Activated naive CD4-positive, alpha-beta T cell treated with anti-CD3 and anti-CD28 coated beads for 36 hours (primary cell): ENCODE measurements at regions of chr7 and their contacts with region 1.

Region 1: GRCh38 chr7:7968543-7969305 is at the start of gene GLCCI1:
- DNase-seq: peak; percentile 98
- H3K4me3 Mint-ChIP-seq: peak within 1 kb of the TSS; percentile 90
- H3K27ac Mint-ChIP-seq: peak within 1 kb of the TSS; percentile 92
- H3K4me1 Mint-ChIP-seq: peaks cover 29% of the 10 kb centered on the region
- H3K27me3 Mint-ChIP-seq: no peaks in the 10 kb centered on the region
- total RNA-seq, gene GLCCI1: 12.9 to 13.3 TPM

Region 2: GRCh38 chr7:7182156-7183060 is 786.3 kb before region 1 on chr7 and contains the start of gene C1GALT1:
- CTCF ChIA-PET with region 1: interaction called, 4 read pairs
- intact Hi-C with region 1: loop called (anchors 1 kb)
- DNase-seq: peak; percentile 97
- H3K4me3 Mint-ChIP-seq: peak within 1 kb of the TSS; percentile 90
- H3K27ac Mint-ChIP-seq: peak within 1 kb of the TSS; percentile 98
- H3K4me1 Mint-ChIP-seq: peaks cover 19% of the 10 kb centered on the region
- H3K27me3 Mint-ChIP-seq: no peaks in the 10 kb centered on the region
- total RNA-seq, gene C1GALT1: 25.7 to 29.1 TPM

Region 3: GRCh38 chr7:7529328-7529727 is 439.4 kb before region 1 on chr7:
- CTCF ChIA-PET with region 1: no interaction called
- intact Hi-C with region 1: no loop called
- DNase-seq: no peak
- H3K4me3 Mint-ChIP-seq: no peak overlapping the region
- H3K27ac Mint-ChIP-seq: no peak overlapping the region
- H3K4me1 Mint-ChIP-seq: no peaks in the 10 kb centered on the region
- H3K27me3 Mint-ChIP-seq: no peaks in the 10 kb centered on the region

Region 4: GRCh38 chr7:7719236-7719635 is 249.5 kb before region 1 on chr7:
- CTCF ChIA-PET with region 1: no interaction called
- intact Hi-C with region 1: loop called (anchors 1 kb)
- DNase-seq: peak; percentile 77
- H3K4me3 Mint-ChIP-seq: no peak overlapping the region
- H3K27ac Mint-ChIP-seq: peak overlapping the region; percentile 63
- H3K4me1 Mint-ChIP-seq: peaks cover 19% of the 10 kb centered on the region
- H3K27me3 Mint-ChIP-seq: no peaks in the 10 kb centered on the region

Region 5: GRCh38 chr7:7830122-7830878 is 138.4 kb before region 1 on chr7:
- CTCF ChIA-PET with region 1: no interaction called
- intact Hi-C with region 1: loop called (anchors 1 kb)
- DNase-seq: peak; percentile 15
- H3K4me3 Mint-ChIP-seq: no peak overlapping the region
- H3K27ac Mint-ChIP-seq: no peak overlapping the region
- H3K4me1 Mint-ChIP-seq: peaks cover 18% of the 10 kb centered on the region
- H3K27me3 Mint-ChIP-seq: no peaks in the 10 kb centered on the region

Region 6: DNA sequence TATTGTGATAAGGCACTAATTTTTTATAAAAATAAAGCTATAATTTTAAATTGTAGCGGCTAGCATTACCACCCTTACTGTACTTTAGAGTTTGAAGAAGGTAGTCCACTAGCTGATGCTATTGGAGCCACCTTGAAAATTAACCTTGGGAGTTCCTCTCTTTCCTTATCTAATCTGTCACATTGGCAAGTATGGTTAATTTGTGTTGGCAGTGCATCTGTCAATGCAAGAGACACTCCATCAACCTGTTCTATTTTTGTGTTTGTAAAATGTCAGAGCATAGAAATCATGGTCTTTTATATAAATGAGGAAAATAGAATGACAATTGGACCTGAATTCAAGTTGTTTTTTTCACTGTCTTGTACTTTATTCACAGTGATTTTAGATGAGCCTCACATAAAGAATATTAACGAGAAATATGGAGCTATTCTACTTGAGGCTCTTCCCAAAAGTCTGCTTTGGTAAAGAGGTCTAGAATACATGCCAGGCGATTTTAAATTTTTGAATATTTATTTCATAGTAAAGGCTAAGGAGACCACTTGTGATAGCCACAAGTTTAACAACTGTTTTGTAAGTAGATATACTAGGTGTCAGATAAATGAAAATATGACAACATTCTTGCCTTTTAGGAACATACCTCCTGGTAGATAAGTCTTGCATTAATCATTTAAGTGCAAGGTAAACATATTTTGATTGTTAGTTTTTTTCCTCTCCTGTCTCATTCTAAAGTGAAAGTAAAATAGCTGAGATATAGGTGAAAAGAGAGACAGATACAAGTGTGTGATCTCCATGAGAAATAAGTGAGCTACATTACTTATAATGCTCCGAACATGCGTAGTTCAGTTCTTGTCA is 20.6 kb after region 1 on chr7:
- CTCF ChIA-PET with region 1: interaction called, 5 read pairs
- intact Hi-C with region 1: loop called (anchors 1 kb)
- DNase-seq: no peak
- H3K4me3 Mint-ChIP-seq: peak overlapping the region; percentile 56
- H3K27ac Mint-ChIP-seq: peak overlapping the region; percentile 12
- H3K4me1 Mint-ChIP-seq: peaks cover 41% of the 10 kb centered on the region
- H3K27me3 Mint-ChIP-seq: no peaks in the 10 kb centered on the region

Region 7: DNA sequence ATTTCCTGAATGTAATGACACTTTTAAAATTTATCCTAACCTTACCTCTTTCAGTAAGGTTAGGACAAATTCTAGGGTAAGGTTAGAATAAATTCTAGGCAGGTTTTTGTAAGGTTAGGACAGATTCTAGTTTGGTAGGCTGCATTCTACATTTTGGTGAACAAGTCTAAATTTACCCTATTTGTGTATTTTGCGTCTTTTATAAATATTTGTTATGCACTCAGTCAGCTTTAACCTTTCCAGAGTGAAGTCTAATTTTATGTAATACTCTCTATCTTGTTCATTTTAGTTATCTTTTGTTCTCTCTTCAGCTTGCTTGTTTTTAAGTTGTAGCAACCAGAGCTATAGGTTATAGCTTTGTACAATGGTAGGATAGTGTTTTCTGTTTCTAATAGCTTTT is 53.9 kb after region 1 on chr7:
- CTCF ChIA-PET with region 1: no interaction called
- intact Hi-C with region 1: no loop called
- DNase-seq: no peak
- H3K4me3 Mint-ChIP-seq: no peak overlapping the region
- H3K27ac Mint-ChIP-seq: no peak overlapping the region
- H3K4me1 Mint-ChIP-seq: peaks cover 11% of the 10 kb centered on the region
- H3K27me3 Mint-ChIP-seq: no peaks in the 10 kb centered on the region

Region 8: GRCh38 chr7:8125680-8126444 is 157.1 kb after region 1 on chr7:
- CTCF ChIA-PET with region 1: interaction called, 5 read pairs
- intact Hi-C with region 1: loop called (anchors 1 kb)
- DNase-seq: peak; percentile 86
- H3K4me3 Mint-ChIP-seq: peak overlapping the region; percentile 71
- H3K27ac Mint-ChIP-seq: peak overlapping the region; percentile 96
- H3K4me1 Mint-ChIP-seq: peaks cover 57% of the 10 kb centered on the region
- H3K27me3 Mint-ChIP-seq: no peaks in the 10 kb centered on the region

Region 9: DNA sequence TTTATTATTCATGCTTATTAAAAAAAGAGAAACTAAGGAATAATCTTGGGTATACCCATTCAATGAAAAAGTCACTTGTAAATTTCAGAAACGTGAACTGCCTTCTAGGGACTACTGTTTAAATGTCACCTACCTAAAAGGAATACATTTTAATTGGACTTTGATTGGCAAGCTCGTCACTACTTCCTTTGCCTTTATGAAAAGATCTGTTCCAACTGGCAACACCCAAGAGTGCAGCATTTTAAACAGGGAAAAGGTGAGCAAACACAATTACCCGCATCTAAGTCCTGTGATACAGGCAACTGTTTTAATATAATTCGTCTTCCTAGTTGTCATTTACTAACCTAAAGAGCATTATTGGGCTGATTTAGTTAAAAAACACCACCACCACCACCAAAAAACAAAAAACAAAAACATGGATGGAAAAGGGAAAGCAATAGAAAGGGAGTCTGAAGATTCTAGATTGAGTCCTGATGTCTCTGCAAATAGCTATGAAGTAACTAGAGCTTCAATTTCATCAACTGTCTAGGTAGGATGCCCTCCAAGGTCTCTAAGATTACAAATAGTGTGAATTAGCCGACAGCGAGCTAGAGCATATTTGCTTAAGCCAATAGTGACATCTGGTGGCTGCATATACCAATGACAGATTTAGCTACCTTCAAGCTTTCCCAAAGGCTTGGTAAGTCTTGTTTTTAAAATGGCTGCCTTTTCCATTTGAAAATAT is 327.1 kb after region 1 on chr7:
- CTCF ChIA-PET with region 1: no interaction called
- intact Hi-C with region 1: loop called (anchors 1 kb)
- DNase-seq: peak; percentile 43
- H3K4me3 Mint-ChIP-seq: no peak overlapping the region
- H3K27ac Mint-ChIP-seq: no peak overlapping the region
- H3K4me1 Mint-ChIP-seq: peaks cover 3% of the 10 kb centered on the region
- H3K27me3 Mint-ChIP-seq: peaks cover 3% of the 10 kb centered on the region

Region 10: DNA sequence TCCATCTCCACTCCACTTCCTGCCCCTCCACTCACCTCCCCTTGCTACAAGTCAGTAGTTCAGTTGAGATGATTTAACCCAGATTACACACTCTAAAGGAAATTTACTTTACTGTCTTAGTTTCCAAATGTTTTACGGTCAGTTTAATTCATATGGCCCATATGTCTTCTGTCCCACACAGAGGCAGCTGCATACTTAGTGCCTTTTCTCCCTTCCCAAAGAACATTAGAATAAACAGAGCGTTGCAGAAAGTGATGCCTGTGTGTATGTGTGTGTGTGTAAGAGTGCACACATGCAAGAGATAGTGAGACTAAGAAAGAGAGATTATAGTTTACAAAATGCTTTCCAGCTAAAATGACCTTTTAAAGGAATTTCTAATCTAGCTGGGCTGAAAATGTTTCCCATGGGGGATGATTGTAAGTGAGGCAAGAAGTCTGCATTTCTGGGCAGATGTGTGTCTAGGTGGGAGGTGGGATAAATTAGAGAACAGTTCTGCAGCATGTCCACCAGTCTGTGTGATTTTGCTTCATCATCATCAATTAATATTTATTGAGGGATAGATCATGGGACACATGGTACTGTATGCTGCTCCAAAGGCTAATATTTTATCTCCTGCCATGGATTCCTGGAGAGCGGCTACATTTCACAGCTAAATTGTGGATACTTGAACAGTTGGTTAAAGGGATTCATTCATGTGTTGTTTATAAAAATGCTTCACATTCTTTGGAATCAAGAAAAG is 546.2 kb after region 1 on chr7:
- CTCF ChIA-PET with region 1: no interaction called
- intact Hi-C with region 1: no loop called
- DNase-seq: no peak
- H3K4me3 Mint-ChIP-seq: no peak overlapping the region
- H3K27ac Mint-ChIP-seq: no peak overlapping the region
- H3K4me1 Mint-ChIP-seq: no peaks in the 10 kb centered on the region
- H3K27me3 Mint-ChIP-seq: no peaks in the 10 kb centered on the region